A549 (cell line): ENCODE measurements at regions of chr17 and their contacts with region 1.

Region 1: DNA sequence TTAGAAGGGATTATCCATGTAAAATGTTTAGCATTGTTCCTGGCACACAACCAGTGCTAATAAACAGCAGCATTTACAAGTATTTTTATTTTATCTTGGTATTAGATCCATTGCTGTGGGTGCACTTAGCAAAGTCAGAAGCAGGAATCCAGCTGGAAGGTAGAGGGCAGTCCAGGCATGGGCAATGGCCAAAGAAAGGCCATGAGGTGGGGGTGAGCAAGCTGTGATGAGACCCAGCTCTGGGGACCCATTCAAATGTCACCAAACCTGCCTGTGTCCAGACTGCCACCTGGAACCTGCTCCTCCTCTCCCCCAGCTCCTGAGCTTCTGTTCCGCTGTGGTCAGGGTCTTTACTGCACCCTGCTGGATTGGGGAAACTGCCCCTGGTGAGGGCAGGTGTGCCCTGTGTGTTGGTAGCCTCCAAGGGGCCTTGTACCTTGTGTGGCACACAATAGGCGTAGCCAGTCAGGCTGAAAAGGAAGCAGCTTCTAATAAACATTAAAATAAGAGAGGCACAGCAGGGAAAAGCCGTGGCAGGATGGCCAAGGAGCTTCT is 118.0 kb upstream of the CRHR1 start:
- DNase-seq: no peak
- ATAC-seq: peak in 1 of 2 experiments; percentile 43; a peak in 4 of 6 replicates
- H3K4me3 ChIP-seq: no peak overlapping the region
- H3K27ac ChIP-seq: no peak overlapping the region
- H3K4me1 ChIP-seq: no peaks in the 10 kb centered on the region
- CTCF ChIP-seq: peak; percentile 24; the same call in 1 of the 3 replicates
- EP300 ChIP-seq: no peak
- POLR2A ChIP-seq: no peak
- RAD21 ChIP-seq: peak; percentile 56 to 57

Region 2: GRCh38 chr17:45573924-45574770 is 92.0 kb before region 1 on chr17:
- CTCF ChIA-PET with region 1: no interaction called
- POLR2A ChIA-PET with region 1: no interaction called
- DNase-seq: peak in 1 of 2 experiments; percentile 10
- ATAC-seq: peak in 1 of 2 experiments; percentile 42; a peak in 3 of 6 replicates
- H3K4me3 ChIP-seq: no peak overlapping the region
- H3K27ac ChIP-seq: no peak overlapping the region
- H3K4me1 ChIP-seq: peaks cover 16% of the 10 kb centered on the region; the same call in 2 of the 3 replicates
- CTCF ChIP-seq: no peak
- EP300 ChIP-seq: no peak
- POLR2A ChIP-seq: no peak
- RAD21 ChIP-seq: no peak

Region 3: GRCh38 chr17:45732926-45733505 is 66.9 kb after region 1 on chr17:
- CTCF ChIA-PET with region 1: no interaction called
- POLR2A ChIA-PET with region 1: no interaction called
- DNase-seq: no peak
- ATAC-seq: no peak
- H3K4me3 ChIP-seq: no peak overlapping the region
- H3K27ac ChIP-seq: no peak overlapping the region
- H3K4me1 ChIP-seq: no peaks in the 10 kb centered on the region
- CTCF ChIP-seq: no peak
- EP300 ChIP-seq: no peak
- POLR2A ChIP-seq: no peak
- RAD21 ChIP-seq: no peak

Region 4: GRCh38 chr17:45809484-45809883 is 143.4 kb after region 1 on chr17:
- CTCF ChIA-PET with region 1: no interaction called
- POLR2A ChIA-PET with region 1: no interaction called
- DNase-seq: no peak
- ATAC-seq: no peak
- H3K4me3 ChIP-seq: no peak overlapping the region
- H3K27ac ChIP-seq: no peak overlapping the region
- H3K4me1 ChIP-seq: no peaks in the 10 kb centered on the region
- CTCF ChIP-seq: no peak
- EP300 ChIP-seq: no peak
- POLR2A ChIP-seq: no peak
- RAD21 ChIP-seq: no peak

Region 5: DNA sequence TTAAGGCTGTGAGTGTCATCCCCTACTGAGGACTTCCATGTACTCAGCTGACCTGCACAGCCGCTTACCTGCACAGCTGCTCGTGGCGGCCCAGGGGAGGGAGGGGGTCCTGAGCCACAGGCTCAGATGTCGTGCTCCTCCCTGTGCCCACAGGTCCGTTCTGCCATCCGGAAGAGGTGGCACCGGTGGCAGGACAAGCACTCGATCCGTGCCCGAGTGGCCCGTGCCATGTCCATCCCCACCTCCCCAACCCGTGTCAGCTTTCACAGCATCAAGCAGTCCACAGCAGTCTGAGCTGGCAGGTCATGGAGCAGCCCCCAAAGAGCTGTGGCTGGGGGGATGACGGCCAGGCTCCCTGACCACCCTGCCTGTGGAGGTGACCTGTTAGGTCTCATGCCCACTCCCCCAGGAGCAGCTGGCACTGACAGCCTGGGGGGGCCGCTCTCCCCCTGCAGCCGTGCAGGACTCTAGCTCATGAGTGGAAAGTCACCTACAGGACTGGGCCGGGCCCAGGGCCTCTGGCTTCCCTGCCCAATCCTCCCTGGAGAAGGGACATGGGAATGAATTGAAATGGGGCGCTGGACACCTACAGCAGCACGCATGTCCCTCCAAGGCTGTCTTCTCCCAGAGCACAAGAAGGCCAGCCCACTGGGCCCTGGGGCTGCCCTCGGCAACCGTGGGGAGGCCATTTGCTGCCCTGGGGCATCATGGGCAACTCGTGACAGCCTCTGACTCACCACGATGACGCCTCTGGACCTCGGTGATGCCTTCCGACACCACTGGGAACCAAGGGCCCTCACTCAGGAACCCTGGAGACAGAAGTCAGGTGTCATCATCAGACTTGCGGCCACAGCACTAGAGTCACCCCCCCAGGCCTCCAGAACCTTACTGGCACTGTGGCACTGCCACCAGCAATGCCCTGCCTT is 168.6 kb after region 1 on chr17:
- CTCF ChIA-PET with region 1: interaction called, 90 read pairs
- POLR2A ChIA-PET with region 1: no interaction called
- DNase-seq: peak; percentile 51 to 60
- ATAC-seq: peak; percentile 29 to 48
- H3K4me3 ChIP-seq: no peak overlapping the region
- H3K27ac ChIP-seq: peak overlapping the region in 1 of 2 experiments; percentile 17; a peak in 2 of 6 replicates
- H3K4me1 ChIP-seq: peaks cover 6% of the 10 kb centered on the region; the same call in 2 of the 3 replicates
- CTCF ChIP-seq: no peak
- EP300 ChIP-seq: no peak
- POLR2A ChIP-seq: no peak
- RAD21 ChIP-seq: no peak